ENCODE measurements at regions of chr1 and their contacts with region 1.

Region 1: DNA sequence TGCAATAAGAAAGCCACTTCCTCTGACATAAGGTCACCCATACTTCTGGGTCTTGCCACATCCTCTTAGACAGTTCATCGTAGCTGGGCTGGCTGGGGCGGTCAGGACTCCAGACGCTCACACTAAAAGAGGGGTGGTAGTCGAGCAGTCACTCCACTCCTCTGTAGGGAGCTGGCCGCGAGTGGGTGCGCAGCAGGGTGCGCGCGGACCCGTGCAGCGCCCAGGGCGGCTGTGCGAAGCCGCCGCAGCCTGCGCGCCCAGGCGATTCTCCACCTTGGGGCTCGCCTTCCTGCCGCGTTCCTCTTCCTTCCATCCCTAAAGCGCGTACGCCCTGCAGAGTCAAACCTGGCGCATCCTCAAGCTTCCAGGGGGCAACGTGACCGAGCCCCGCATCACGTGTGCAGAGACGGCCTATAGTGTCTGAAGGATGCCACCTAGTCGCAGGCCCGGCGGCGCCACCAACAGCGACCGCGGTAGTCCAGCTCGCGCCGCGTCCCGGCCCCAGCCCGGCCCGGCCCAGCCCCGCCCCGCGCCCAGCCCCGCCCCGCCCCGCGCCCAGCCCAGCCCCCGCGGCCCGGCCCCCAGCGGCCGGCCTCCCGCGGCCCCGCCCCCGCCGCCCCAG is 360 bp upstream of the PRDX6 start:
- DNase-seq: peak in 1 of 2 donors; percentile 95
- H3K4me3 ChIP-seq: peak overlapping the region; percentile 88 to 94
- H3K27ac ChIP-seq: peak overlapping the region; percentile 90
- H3K4me1 ChIP-seq: peaks cover 61% of the 10 kb centered on the region
- H3K27me3 ChIP-seq: no peaks in the 10 kb centered on the region
- CTCF ChIP-seq: no peak
- POLR2A ChIP-seq: peak in 1 of 2 donors; percentile 45

Region 2: DNA sequence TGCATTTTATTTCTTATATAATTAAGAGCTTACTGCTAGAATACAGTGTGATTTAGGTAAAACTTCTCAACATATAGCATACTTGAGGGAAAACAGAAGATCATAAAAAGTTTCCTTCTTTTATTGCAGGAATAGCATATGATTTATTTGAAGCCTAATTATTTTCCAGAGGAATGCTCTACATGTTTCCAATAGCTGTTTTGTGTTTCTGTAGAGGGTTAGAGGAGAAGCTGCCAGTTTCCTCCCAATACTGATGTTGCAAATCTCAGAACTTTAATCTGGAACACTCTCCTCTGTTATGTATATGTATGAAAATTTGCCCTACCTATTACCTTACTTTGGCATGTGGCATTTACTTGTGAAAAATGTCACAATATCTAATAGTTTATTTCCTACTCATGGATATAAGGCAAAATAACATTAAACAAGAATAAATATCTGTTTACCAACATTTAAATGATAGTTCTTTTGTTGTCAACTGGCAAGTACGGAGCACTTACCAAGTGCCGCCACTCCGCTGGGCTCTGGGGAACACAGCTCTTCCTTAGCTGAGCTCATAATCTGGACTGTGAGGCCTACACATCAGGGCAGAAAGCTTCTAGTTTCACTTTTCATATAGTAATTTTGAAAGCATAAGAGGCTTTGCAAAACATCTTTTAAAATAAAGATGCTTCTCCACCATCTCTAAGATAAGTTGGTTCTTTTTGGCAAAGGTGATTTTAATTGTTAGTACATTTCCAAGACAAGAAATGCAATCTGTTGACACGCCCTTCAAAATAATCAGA is 1296.1 kb before region 1 on chr1:
- intact Hi-C with region 1: no loop called
- DNase-seq: no peak
- H3K4me3 ChIP-seq: peak overlapping the region; percentile 18 to 20
- H3K27ac ChIP-seq: peak overlapping the region; percentile 89
- H3K4me1 ChIP-seq: peaks cover 26% of the 10 kb centered on the region
- H3K27me3 ChIP-seq: no peaks in the 10 kb centered on the region
- CTCF ChIP-seq: no peak
- POLR2A ChIP-seq: no peak

Region 3: DNA sequence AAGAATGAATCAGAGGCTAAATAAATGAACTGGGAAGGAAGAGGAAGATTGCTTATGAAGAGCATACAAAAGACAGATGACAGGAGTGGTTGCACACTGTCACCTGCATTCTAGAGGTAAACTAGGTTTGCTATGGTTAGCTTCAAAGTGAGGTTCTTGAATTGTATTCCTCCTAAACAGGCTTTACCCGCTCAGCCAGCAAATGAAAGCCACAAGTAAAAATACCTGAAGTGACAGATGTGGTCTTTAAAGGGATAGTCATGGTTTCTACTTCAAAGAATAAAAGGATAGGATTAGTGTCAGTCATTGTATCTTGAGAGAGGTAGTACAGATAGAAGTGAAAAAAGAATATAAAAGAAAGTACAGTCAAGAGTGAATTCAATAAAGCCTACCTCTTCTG is 32.0 kb before region 1 on chr1:
- intact Hi-C with region 1: no loop called
- DNase-seq: no peak
- H3K4me3 ChIP-seq: no peak overlapping the region
- H3K27ac ChIP-seq: no peak overlapping the region
- H3K4me1 ChIP-seq: no peaks in the 10 kb centered on the region
- H3K27me3 ChIP-seq: no peaks in the 10 kb centered on the region
- CTCF ChIP-seq: no peak
- POLR2A ChIP-seq: no peak

Region 4: DNA sequence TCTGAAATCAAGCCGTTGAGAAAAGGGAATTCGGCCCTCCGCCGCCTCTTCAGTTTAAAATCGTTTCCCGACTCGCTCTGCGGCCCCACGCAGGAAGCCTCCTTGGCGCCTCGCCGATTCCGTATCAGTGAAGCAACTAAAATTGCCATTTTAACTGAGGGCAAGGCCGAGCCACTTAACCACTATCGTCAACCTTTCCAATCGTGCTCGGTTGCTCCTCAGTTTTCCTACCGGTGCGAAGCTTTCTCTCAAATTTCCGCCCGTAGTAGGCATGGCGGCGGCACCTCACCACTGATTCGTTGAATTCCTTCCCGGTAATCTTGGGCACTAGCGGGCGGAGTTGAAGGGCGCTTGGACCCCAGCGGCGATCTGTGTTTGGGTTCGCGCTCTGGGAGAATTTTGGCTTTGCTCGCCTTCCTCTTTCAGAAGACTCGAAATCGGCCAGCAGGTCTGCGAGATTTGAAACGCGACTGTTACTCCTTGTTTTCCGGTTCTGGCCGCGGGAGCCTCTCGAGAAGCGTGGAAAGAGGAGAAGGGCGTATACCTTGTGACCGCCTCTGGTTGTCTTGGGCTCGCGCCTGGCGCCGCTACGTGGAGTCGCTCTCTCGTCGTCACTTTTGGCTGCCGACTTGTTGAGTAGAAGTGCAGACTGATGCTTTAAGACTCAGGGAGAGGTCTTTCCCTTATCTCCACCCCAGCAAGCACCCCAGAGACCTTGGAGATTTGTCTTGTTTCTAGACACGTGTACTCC is 347.7 kb after region 1 on chr1 and contains the starts of genes CENPL and DARS2:
- intact Hi-C with region 1: loop called (anchors 1 kb)
- DNase-seq: peak; percentile 96 to 98
- H3K4me3 ChIP-seq: peak within 1 kb of the TSS; percentile 60 to 81
- H3K27ac ChIP-seq: peak within 1 kb of the TSS; percentile 87
- H3K4me1 ChIP-seq: peaks cover 15% of the 10 kb centered on the region
- H3K27me3 ChIP-seq: no peaks in the 10 kb centered on the region
- CTCF ChIP-seq: peak in 1 of 3 experiments; percentile 20
- POLR2A ChIP-seq: peak in 1 of 2 donors; percentile 17
- total RNA-seq, gene CENPL: 3.7 TPM
- total RNA-seq, gene DARS2: 6.4 TPM

Region 5: GRCh38 chr1:173867753-173868265 is 391.0 kb after region 1 on chr1 and contains the start of gene GAS5:
- intact Hi-C with region 1: loop called (anchors 5 kb)
- DNase-seq: peak; percentile 100
- H3K4me3 ChIP-seq: peak within 1 kb of the TSS; percentile 86 to 92
- H3K27ac ChIP-seq: peak within 1 kb of the TSS; percentile 99
- H3K4me1 ChIP-seq: peaks cover 42% of the 10 kb centered on the region
- H3K27me3 ChIP-seq: no peaks in the 10 kb centered on the region
- CTCF ChIP-seq: peak in 1 of 3 experiments; percentile 22
- POLR2A ChIP-seq: peak; percentile 95 to 96
- total RNA-seq, gene GAS5: 466 TPM

Region 6: GRCh38 chr1:174413632-174414031 is 936.9 kb after region 1 on chr1:
- intact Hi-C with region 1: no loop called
- DNase-seq: no peak
- H3K4me3 ChIP-seq: no peak overlapping the region
- H3K27ac ChIP-seq: no peak overlapping the region
- H3K4me1 ChIP-seq: no peaks in the 10 kb centered on the region
- H3K27me3 ChIP-seq: no peaks in the 10 kb centered on the region
- CTCF ChIP-seq: no peak
- POLR2A ChIP-seq: no peak

Measured in vagina (tissue), 2 donors.